ENCODE measurements at regions of chr12 and their contacts with region 1.

Region 1: DNA sequence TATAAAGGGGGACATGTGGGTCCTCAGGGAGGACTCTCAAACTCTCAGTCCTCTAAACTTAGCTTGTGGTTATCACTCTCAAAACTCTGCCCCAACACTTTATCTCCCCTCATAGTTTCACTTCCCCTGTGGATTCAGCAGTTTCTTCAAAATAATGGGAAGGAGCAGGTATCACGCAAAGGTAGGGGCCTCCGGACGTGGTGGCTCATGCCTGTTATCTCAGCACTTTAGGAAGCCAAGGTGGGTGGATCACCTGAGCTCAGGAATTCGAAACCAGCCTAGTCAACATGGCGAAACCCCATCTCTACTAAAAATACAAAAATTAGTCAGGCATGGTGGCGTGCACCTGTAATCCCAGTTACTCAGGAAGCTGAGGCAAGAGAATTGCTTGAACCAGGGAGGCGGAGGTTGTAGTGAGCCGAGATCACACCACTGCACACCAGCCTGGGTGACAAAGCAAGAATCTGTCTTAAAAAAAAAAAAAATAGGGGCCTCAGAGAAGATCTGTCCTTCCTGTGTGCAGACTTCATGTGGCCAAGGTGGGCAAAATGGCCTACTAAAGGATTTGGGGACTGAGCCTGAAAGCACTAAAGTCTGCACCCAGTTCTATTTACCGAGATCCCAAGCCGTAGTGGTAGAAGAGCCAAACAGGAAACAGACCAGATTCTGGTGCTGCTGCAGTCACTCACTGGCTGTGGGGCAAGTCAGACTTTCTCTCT is 6.4 kb downstream of the ITGB7 start:
- DNase-seq: no peak
- ATAC-seq: peak; percentile 65
- H3K4me3 Mint-ChIP-seq: peak overlapping the region; percentile 64
- H3K27ac Mint-ChIP-seq: peak overlapping the region; percentile 86
- H3K4me1 Mint-ChIP-seq: peaks cover 81% of the 10 kb centered on the region
- H3K27me3 Mint-ChIP-seq: no peaks in the 10 kb centered on the region
- CTCF ChIP-seq: no peak

Region 2: GRCh38 chr12:53086361-53086760 is 114.3 kb before region 1 on chr12:
- CTCF ChIA-PET with region 1: no interaction called
- POLR2A ChIA-PET with region 1: no interaction called
- intact Hi-C with region 1: no loop called
- DNase-seq: no peak
- ATAC-seq: no peak
- H3K4me3 Mint-ChIP-seq: no peak overlapping the region
- H3K27ac Mint-ChIP-seq: no peak overlapping the region
- H3K4me1 Mint-ChIP-seq: no peaks in the 10 kb centered on the region
- H3K27me3 Mint-ChIP-seq: peaks cover 22% of the 10 kb centered on the region
- CTCF ChIP-seq: no peak

Region 3: DNA sequence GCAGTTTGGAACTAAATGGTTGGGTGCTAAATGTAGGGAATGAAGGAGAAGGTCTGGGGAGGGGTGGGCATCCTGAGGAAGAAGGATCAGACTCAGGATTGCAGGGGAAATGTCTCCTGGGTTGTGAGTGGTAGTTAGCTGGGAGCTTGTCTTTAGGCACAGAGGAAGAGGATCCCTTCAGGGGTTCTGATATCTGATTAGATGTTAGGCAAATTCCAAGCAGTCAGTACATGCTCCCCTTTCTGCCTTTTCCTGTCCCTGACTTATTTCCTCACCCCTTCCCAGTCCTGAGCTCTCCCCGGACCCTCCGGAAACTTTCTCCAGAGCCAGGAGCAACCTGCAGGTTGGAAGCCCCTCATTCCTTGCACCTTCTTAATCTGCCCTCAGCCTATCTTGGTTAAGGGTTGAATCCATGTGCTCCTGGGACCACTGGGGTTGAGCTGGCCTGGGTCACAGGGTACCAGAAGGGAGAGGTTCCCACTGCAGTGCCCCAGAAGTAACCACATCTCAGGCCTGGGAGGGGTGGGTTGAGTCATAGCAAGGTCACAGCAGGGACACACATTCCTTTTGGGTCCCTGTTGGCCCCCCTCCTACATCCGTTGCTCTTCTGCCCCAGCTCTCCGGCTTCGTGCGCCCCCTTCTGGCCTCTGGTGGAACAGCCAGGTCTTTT is 101.5 kb before region 1 on chr12:
- CTCF ChIA-PET with region 1: interaction called, 10 read pairs
- POLR2A ChIA-PET with region 1: no interaction called
- intact Hi-C with region 1: no loop called
- DNase-seq: peak; percentile 75
- ATAC-seq: peak; percentile 66
- H3K4me3 Mint-ChIP-seq: peak overlapping the region; percentile 13
- H3K27ac Mint-ChIP-seq: no peak overlapping the region
- H3K4me1 Mint-ChIP-seq: peaks cover 34% of the 10 kb centered on the region
- H3K27me3 Mint-ChIP-seq: peaks cover 13% of the 10 kb centered on the region
- CTCF ChIP-seq: peak; percentile 99

Region 4: GRCh38 chr12:53174881-53175491 is 25.6 kb before region 1 on chr12:
- CTCF ChIA-PET with region 1: interaction called, 16 read pairs
- POLR2A ChIA-PET with region 1: interaction called, 66 read pairs
- intact Hi-C with region 1: loop called (anchors 1 kb)
- DNase-seq: no peak
- ATAC-seq: no peak
- H3K4me3 Mint-ChIP-seq: no peak overlapping the region
- H3K27ac Mint-ChIP-seq: no peak overlapping the region
- H3K4me1 Mint-ChIP-seq: peaks cover 11% of the 10 kb centered on the region
- H3K27me3 Mint-ChIP-seq: no peaks in the 10 kb centered on the region
- CTCF ChIP-seq: no peak

Region 5: DNA sequence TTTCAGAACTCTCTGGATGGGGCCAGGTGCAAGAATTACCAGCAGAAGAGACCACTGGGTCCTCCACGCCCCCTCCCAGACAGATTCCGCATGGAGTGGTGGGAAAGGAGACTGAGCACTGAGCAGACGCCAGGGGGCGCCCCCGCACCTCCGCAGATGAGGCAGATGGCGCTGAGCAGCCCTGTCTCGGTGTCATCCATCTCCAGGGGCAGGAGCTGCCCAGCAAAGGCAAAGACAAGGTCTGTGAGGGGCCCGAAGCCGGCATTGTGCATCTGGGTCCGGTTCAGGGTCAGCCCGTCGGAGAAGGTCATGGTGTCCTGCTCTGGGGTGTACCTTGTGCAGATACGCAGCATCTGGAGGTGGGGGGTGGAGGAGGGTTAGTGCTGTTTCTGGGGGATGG is 12.7 kb after region 1 on chr12:
- CTCF ChIA-PET with region 1: interaction called, 31 read pairs
- POLR2A ChIA-PET with region 1: interaction called, 48 read pairs
- intact Hi-C with region 1: loop called (anchors 1 kb)
- DNase-seq: peak; percentile 82
- ATAC-seq: peak; percentile 75
- H3K4me3 Mint-ChIP-seq: no peak overlapping the region
- H3K27ac Mint-ChIP-seq: peak overlapping the region; percentile 6
- H3K4me1 Mint-ChIP-seq: peaks cover 76% of the 10 kb centered on the region
- H3K27me3 Mint-ChIP-seq: no peaks in the 10 kb centered on the region
- CTCF ChIP-seq: peak; percentile 49